MCF 10A (cell line): ENCODE measurements at regions of chr4 and their contacts with region 1.

Region 1: DNA sequence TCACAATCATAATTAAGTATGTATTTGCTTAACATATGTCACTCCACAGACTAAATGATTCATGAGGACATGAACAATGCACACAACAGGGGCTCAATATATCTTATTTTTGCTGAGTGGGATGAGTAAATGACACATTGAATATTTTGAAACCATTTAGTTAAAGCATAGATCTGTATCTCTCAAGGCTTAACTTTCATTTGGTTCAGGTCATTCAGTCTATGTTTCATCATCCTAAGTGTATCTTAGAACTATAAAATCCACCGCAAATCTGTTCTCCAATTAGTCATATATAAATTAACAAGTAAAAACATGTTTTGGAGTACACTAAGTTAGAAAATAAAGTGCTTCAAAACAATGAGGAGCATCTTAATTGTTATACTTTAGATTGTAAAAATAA is 45.8 kb downstream of the AREG start:
- DNase-seq: no peak
- H3K4me3 Mint-ChIP-seq: no peak overlapping the region
- H3K27ac Mint-ChIP-seq: peak overlapping the region; percentile 35
- H3K4me1 Mint-ChIP-seq: peaks cover 13% of the 10 kb centered on the region
- H3K27me3 Mint-ChIP-seq: no peaks in the 10 kb centered on the region
- CTCF ChIP-seq: no peak

Region 2: GRCh38 chr4:74473155-74473811 is 17.5 kb before region 1 on chr4:
- CTCF ChIA-PET with region 1: no interaction called
- POLR2A ChIA-PET with region 1: interaction called, 25 read pairs
- intact Hi-C with region 1: no loop called
- DNase-seq: peak; percentile 85
- H3K4me3 Mint-ChIP-seq: no peak overlapping the region
- H3K27ac Mint-ChIP-seq: no peak overlapping the region
- H3K4me1 Mint-ChIP-seq: peaks cover 37% of the 10 kb centered on the region
- H3K27me3 Mint-ChIP-seq: no peaks in the 10 kb centered on the region
- CTCF ChIP-seq: no peak

Region 3: DNA sequence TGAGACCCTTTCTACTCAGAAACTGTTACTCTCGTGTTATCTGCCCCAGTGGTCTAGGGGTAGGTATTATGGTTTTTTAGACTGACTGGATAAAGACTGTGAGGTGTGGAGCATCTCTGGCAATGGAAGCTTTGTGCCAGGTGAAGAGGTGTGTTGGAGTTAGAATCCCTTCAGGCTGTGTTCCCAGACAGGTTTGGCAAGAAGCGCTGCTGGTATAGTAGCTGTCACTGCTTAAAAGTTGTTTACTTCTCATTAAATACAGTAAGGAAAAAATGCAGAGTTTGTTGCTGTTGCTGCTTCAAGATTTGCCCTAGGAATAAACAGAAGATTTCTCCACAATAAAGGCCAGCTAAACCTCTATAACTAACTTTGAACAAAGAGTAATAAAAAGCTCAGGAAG is 10.4 kb before region 1 on chr4:
- CTCF ChIA-PET with region 1: no interaction called
- POLR2A ChIA-PET with region 1: interaction called, 25 read pairs
- intact Hi-C with region 1: no loop called
- DNase-seq: no peak
- H3K4me3 Mint-ChIP-seq: no peak overlapping the region
- H3K27ac Mint-ChIP-seq: no peak overlapping the region
- H3K4me1 Mint-ChIP-seq: peaks cover 7% of the 10 kb centered on the region
- H3K27me3 Mint-ChIP-seq: no peaks in the 10 kb centered on the region
- CTCF ChIP-seq: no peak